ENCODE measurements at regions of chr2 and their contacts with region 1.

Region 1: DNA sequence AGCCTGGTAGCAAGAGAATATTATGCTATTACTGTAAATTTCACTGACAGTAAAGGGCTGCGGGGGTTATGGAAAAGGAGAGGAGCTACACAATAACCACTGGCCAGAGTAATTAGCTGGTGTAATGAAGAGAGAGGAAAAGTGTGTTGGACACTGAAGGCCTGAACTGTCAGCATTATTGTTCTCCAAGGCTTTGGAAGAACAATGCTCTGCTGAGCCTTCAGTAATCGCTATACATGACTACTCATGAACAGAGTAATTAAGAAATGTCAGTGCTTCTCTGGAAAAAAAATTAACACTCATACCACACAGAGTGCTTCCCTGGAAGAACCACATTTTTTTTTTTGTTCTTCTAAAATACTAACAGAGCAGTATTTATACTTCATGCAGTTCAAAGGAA is 931.3 kb downstream of the CPS1 start:
- DNase-seq: no peak
- H3K4me3 ChIP-seq: no peak overlapping the region
- H3K27ac ChIP-seq: no peak overlapping the region
- H3K4me1 ChIP-seq: no peaks in the 10 kb centered on the region
- H3K27me3 ChIP-seq: no peaks in the 10 kb centered on the region
- CTCF ChIP-seq: no peak
- EP300 ChIP-seq: no peak
- POLR2A ChIP-seq: no peak
- RAD21 ChIP-seq: no peak

Region 2: GRCh38 chr2:211455216-211455841 is 32.4 kb before region 1 on chr2:
- CTCF ChIA-PET with region 1: interaction called, 12 read pairs
- POLR2A ChIA-PET with region 1: no interaction called
- DNase-seq: no peak
- H3K4me3 ChIP-seq: no peak overlapping the region
- H3K27ac ChIP-seq: no peak overlapping the region
- H3K4me1 ChIP-seq: no peaks in the 10 kb centered on the region
- H3K27me3 ChIP-seq: no peaks in the 10 kb centered on the region
- CTCF ChIP-seq: peak; percentile 46 to 84 (median 63); a peak in 3 of 4 replicates
- EP300 ChIP-seq: no peak
- POLR2A ChIP-seq: no peak
- RAD21 ChIP-seq: peak; percentile 69 to 73